Endothelial cell of umbilical vein (primary cell): ENCODE measurements at regions of chr11 and their contacts with region 1.

Region 1: DNA sequence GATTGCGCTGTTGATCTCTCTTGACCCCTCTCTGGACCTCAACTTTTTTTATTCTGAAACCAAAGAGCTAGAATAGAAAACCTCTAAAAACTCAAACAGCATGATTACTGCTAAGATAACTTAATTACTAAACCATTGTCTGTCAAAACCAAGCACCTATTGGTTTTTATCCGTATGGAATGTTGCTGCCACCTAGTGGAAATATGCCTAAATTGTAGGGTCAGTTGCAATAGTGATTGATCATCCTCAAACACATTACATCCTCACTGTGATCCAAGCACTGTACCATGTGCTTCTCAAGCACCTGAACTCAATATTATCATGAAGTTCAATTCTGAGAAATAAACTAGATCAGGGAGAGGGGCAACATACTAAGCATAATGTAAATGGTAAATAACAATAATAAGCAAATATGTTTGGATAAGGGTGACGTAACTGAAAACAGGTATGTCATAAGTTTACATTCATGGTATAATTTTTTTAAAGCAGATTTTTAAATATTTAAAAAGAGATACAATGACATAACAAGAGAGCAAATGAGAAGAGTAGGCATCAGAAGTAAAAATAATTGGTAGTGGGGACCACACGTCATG is 3.8 kb upstream of the OR5A2 start:
- DNase-seq: peak; percentile 54
- H3K4me3 ChIP-seq: no peak overlapping the region
- H3K27ac ChIP-seq: no peak overlapping the region
- H3K4me1 ChIP-seq: no peaks in the 10 kb centered on the region
- H3K27me3 ChIP-seq: peaks cover 0 to 5% of the 10 kb centered on the region in 2 experiments
- CTCF ChIP-seq: peak; percentile 60 to 66
- POLR2A ChIP-seq: no peak

Region 2: DNA sequence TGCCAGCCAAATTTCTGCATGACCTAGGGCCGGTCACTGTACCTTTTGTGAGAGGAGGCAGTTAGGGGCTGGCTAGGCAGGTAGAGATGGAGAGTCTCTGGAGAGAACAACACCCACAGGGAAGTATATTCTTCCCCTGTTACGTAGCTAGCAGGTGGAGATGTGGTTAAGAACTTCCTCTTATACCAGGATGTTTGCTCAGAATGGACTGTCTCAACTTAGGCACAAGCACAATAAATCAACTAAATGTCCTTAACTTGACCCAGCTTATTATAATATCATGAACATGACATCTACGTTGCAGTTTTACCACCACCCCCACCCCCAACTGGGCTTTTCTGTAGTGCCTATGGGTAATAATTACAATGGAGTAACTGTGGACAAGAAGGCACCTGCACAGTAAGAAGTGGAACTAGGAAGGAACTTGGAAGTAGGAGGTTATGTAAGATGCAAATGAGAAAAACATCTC is 156.6 kb before region 1 on chr11:
- CTCF ChIA-PET with region 1: no interaction called
- POLR2A ChIA-PET with region 1: no interaction called
- dilution Hi-C with region 1: no loop called
- intact Hi-C with region 1: no loop called
- DNase-seq: no peak
- H3K4me3 ChIP-seq: no peak overlapping the region
- H3K27ac ChIP-seq: no peak overlapping the region
- H3K4me1 ChIP-seq: no peaks in the 10 kb centered on the region
- H3K27me3 ChIP-seq: no peaks in the 10 kb centered on the region
- CTCF ChIP-seq: no peak
- POLR2A ChIP-seq: no peak

Region 3: DNA sequence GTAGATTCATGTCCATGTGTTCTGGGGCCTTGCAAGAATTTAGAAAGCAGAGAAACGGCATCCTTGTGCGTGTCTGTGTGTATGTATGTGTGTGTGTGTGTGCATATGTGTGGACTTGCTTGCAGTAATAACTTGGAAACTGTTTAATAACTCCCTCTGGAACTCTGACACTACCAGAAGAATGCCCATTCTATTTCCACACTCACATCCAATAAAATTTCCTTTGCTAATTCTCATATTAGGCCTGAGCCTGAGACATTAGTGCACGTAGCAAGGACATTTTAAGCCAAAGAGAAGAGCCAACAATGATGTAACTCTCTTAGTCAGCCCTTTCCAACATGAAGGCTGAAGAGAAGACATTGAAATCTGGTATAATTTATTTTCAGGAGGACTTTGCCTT is 29.9 kb after region 1 on chr11:
- CTCF ChIA-PET with region 1: no interaction called
- POLR2A ChIA-PET with region 1: no interaction called
- dilution Hi-C with region 1: no loop called
- intact Hi-C with region 1: loop called (anchors 2 kb)
- DNase-seq: no peak
- H3K4me3 ChIP-seq: no peak overlapping the region
- H3K27ac ChIP-seq: no peak overlapping the region
- H3K4me1 ChIP-seq: peaks cover 7% of the 10 kb centered on the region
- H3K27me3 ChIP-seq: no peaks in the 10 kb centered on the region
- CTCF ChIP-seq: no peak
- POLR2A ChIP-seq: no peak

Region 4: GRCh38 chr11:59510940-59511589 is 81.0 kb after region 1 on chr11 and contains the start of gene OR4D9:
- CTCF ChIA-PET with region 1: no interaction called
- POLR2A ChIA-PET with region 1: no interaction called
- dilution Hi-C with region 1: no loop called
- intact Hi-C with region 1: loop called (anchors 5 kb)
- DNase-seq: peak; percentile 83
- H3K4me3 ChIP-seq: peak within 1 kb of the TSS in 1 of 3 experiments; percentile 30
- H3K27ac ChIP-seq: peak within 1 kb of the TSS; percentile 50
- H3K4me1 ChIP-seq: peaks cover 17% of the 10 kb centered on the region
- H3K27me3 ChIP-seq: no peaks in the 10 kb centered on the region
- CTCF ChIP-seq: no peak
- POLR2A ChIP-seq: no peak
- total RNA-seq, gene OR4D9: not detected in 2 replicates

Region 5: DNA sequence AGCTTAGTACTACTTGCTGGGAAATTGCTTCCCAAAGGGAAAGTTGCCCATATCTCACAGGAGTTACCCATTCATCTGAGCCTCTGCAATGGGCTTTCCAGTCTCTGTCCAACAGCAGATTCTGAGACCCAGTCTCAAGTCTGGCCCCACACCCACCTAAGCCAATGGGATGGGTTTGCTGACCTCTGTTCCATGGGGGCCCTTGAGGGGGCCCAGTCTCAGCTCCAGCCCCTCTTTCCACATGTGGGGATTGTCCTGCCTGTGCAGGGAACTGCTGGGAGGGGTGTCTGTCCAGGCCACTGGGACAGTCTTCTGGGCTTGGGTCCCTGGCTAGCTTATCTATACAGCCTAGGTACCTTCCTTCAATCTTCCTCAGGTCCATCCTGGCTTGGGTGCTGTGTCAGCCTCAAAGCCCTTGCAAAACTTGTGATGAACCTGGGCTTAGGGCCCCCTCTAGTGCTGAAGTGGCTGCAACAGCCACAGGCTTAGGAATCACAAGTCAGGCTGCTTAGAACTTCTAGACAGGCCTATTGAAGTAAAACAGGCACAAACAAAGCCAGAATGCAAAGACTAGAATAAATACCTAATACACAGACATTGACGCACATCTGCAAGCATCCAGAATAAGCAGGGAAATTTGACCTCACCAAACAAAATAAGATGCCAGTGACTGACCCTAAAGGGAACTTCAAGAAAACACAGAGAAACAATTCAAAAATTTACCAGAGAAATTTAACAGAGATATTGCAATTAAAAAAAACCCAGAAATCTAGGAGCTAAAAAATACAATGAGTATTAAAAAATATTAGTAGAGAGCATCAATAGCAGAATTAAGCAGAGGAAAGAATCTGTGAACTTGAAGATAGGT is 250.5 kb after region 1 on chr11:
- CTCF ChIA-PET with region 1: no interaction called
- POLR2A ChIA-PET with region 1: no interaction called
- dilution Hi-C with region 1: no loop called
- intact Hi-C with region 1: loop called (anchors 10 kb)
- DNase-seq: peak; percentile 81
- H3K4me3 ChIP-seq: no peak overlapping the region
- H3K27ac ChIP-seq: no peak overlapping the region
- H3K4me1 ChIP-seq: no peaks in the 10 kb centered on the region
- H3K27me3 ChIP-seq: peaks cover 2% of the 10 kb centered on the region in 2 experiments
- CTCF ChIP-seq: peak; percentile 76 to 78
- POLR2A ChIP-seq: no peak